ENCODE measurements at regions of chr20 and their contacts with region 1.

Region 1: DNA sequence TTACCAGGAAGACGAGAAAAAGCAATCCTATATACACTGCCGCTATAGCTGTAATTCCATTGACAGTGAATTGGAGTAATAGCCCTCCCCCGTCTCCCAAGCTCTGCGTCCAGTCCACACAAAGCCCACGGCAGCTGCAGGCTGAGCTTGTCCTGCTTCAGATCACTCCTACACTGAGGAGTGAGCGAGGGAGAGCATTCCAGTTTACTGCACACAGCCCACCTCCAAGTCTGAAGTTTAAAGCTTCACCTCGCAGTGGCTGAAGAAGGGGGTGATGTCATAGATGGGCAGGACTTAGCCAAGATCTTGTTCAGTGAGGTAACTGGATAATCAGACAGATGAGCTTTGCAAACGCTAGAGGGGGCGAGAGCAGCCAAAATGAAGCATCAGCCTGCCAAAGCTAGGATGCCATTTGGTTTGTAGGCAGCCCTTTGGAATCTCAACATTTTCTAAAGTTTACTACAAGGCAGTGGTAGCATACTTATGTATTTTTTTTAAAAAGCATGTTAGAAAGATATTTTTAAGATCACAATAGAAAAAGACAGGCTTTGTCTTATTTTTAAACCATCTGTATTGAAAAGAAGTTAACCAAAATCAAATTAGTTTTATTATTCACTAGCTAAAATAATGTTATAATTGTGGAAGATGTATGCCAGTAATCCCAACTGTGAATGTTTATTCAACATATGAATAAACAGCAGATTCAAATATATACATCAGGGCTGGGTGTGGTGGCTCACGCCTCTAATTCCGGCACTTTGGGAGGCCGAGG is at the start of gene FLRT3:
- DNase-seq: peak; percentile 96
- ATAC-seq: peak; percentile 94
- H3K4me3 ChIP-seq: peak within 1 kb of the TSS; percentile 45
- H3K27ac ChIP-seq: peak within 1 kb of the TSS; percentile 8; the same call in 1 of the 2 replicates
- H3K4me1 ChIP-seq: peaks cover 2% of the 10 kb centered on the region; the same call in 1 of the 2 replicates
- H3K27me3 ChIP-seq: no peaks in the 10 kb centered on the region
- CTCF ChIP-seq: peak; percentile 86
- POLR2A ChIP-seq: peak; percentile 66
- RAD21 ChIP-seq: peak; percentile 87
- total RNA-seq, gene FLRT3: 5.8 and 6.6 TPM in 2 replicates

Region 2: GRCh38 chr20:14142171-14142570 is 195.4 kb before region 1 on chr20:
- CTCF ChIA-PET with region 1: no interaction called
- POLR2A ChIA-PET with region 1: no interaction called
- dilution Hi-C with region 1: no loop called
- in situ Hi-C with region 1: no loop called
- intact Hi-C with region 1: loop called (anchors 2 kb)
- DNase-seq: peak; percentile 19
- ATAC-seq: no peak
- H3K4me3 ChIP-seq: no peak overlapping the region
- H3K27ac ChIP-seq: no peak overlapping the region
- H3K4me1 ChIP-seq: no peaks in the 10 kb centered on the region
- H3K27me3 ChIP-seq: no peaks in the 10 kb centered on the region
- CTCF ChIP-seq: peak; percentile 39; the same call in 1 of the 2 replicates
- POLR2A ChIP-seq: no peak
- RAD21 ChIP-seq: peak; percentile 53

Region 3: DNA sequence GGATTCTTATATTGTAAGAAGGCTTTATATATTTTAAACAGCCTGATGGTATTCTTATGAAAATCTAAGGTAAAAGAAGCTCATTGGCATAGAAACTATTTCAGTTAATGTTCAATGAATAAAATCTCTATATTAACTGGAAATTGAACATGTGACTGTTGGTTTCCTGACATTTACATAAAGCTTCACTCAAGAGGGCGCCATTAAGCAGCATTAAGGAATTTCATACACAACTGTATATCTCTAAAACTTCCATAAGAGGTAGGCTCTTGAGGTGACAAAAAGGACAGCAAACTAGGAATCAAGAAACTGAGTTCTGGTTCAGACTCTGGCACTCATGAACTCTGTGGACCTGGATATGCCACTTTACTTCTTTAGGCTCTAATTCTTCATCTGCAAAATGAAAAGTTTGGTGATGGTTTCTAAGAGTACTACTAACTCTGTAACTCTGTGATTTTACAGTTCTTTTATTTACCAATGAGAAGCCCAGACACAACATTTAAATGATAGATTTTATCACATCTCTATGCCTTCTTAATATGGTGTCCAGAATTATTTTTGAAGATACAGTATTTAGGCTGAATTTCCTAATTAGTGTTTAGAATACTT is 147.7 kb before region 1 on chr20:
- CTCF ChIA-PET with region 1: no interaction called
- POLR2A ChIA-PET with region 1: no interaction called
- dilution Hi-C with region 1: no loop called
- in situ Hi-C with region 1: no loop called
- intact Hi-C with region 1: loop called (anchors 5 kb)
- DNase-seq: peak; percentile 62
- ATAC-seq: peak; percentile 64
- H3K4me3 ChIP-seq: no peak overlapping the region
- H3K27ac ChIP-seq: no peak overlapping the region
- H3K4me1 ChIP-seq: no peaks in the 10 kb centered on the region
- H3K27me3 ChIP-seq: no peaks in the 10 kb centered on the region
- CTCF ChIP-seq: peak; percentile 60
- POLR2A ChIP-seq: no peak
- RAD21 ChIP-seq: peak; percentile 75

Region 4: DNA sequence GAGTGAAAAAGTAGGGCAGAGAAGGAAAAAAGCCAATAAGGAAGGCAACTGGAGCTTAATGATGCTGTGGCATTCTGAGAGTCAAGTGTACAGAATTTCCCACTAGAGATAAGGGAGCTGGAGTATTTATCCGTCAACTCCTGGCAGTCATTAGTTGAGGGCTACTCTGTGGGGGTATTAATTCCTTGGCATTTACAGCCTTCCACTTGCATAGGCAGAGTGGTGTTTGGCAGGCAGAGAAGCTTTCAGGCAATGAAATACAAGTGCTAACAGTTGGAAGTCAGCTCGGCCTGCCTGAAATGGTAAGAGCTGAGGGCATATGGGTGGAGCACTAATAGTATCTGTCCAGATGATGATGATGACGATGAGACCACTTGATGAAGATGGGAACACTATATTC is 207.1 kb after region 1 on chr20:
- CTCF ChIA-PET with region 1: no interaction called
- POLR2A ChIA-PET with region 1: no interaction called
- dilution Hi-C with region 1: no loop called
- in situ Hi-C with region 1: no loop called
- intact Hi-C with region 1: no loop called
- DNase-seq: no peak
- ATAC-seq: no peak
- H3K4me3 ChIP-seq: no peak overlapping the region
- H3K27ac ChIP-seq: no peak overlapping the region
- H3K4me1 ChIP-seq: no peaks in the 10 kb centered on the region
- H3K27me3 ChIP-seq: no peaks in the 10 kb centered on the region
- CTCF ChIP-seq: no peak
- POLR2A ChIP-seq: no peak
- RAD21 ChIP-seq: no peak

Region 5: GRCh38 chr20:14561741-14562221 is 224.2 kb after region 1 on chr20:
- CTCF ChIA-PET with region 1: interaction called, 4 read pairs
- POLR2A ChIA-PET with region 1: no interaction called
- dilution Hi-C with region 1: no loop called
- in situ Hi-C with region 1: no loop called
- intact Hi-C with region 1: loop called (anchors 1 kb)
- DNase-seq: peak; percentile 78
- ATAC-seq: peak; percentile 92
- H3K4me3 ChIP-seq: no peak overlapping the region
- H3K27ac ChIP-seq: no peak overlapping the region
- H3K4me1 ChIP-seq: no peaks in the 10 kb centered on the region
- H3K27me3 ChIP-seq: no peaks in the 10 kb centered on the region
- CTCF ChIP-seq: peak; percentile 48
- POLR2A ChIP-seq: no peak
- RAD21 ChIP-seq: peak; percentile 53

Region 6: DNA sequence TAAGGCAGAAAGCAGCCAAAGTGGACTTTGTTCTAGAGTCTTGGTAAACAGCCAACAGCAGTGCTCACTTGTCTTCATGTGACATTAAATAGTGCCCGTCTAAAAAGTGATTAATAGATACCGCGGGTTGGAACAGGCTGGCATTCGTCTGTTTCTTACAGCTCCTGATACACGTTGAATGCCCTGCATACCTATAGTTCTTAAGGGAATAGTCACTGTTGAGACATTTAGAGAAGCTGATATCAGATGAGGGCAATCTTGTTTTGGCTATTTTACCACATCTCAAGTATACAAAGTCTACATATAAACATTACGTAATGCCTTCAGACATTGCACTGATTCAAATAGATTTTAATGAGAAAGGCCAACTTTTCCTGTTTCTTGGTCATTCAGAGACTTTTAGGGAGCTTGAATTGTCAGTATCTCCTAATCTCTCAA is 374.7 kb after region 1 on chr20:
- CTCF ChIA-PET with region 1: no interaction called
- POLR2A ChIA-PET with region 1: no interaction called
- dilution Hi-C with region 1: no loop called
- in situ Hi-C with region 1: no loop called
- intact Hi-C with region 1: loop called (anchors 1 kb)
- DNase-seq: peak; percentile 67
- ATAC-seq: peak; percentile 93
- H3K4me3 ChIP-seq: no peak overlapping the region
- H3K27ac ChIP-seq: no peak overlapping the region
- H3K4me1 ChIP-seq: no peaks in the 10 kb centered on the region
- H3K27me3 ChIP-seq: no peaks in the 10 kb centered on the region
- CTCF ChIP-seq: no peak
- POLR2A ChIP-seq: no peak
- RAD21 ChIP-seq: no peak

Region 7: GRCh38 chr20:15654208-15654645 is 1316.6 kb after region 1 on chr20:
- CTCF ChIA-PET with region 1: no interaction called
- POLR2A ChIA-PET with region 1: no interaction called
- dilution Hi-C with region 1: no loop called
- in situ Hi-C with region 1: no loop called
- intact Hi-C with region 1: loop called (anchors 10 kb)
- DNase-seq: peak; percentile 49
- ATAC-seq: peak; percentile 78
- H3K4me3 ChIP-seq: no peak overlapping the region
- H3K27ac ChIP-seq: no peak overlapping the region
- H3K4me1 ChIP-seq: peaks cover 6% of the 10 kb centered on the region; the same call in 1 of the 2 replicates
- H3K27me3 ChIP-seq: no peaks in the 10 kb centered on the region
- CTCF ChIP-seq: peak; percentile 53
- POLR2A ChIP-seq: no peak
- RAD21 ChIP-seq: peak; percentile 50

Measured in IMR-90 (cell line).